ENCODE measurements at regions of chr17 and their contacts with region 1.

Region 1: DNA sequence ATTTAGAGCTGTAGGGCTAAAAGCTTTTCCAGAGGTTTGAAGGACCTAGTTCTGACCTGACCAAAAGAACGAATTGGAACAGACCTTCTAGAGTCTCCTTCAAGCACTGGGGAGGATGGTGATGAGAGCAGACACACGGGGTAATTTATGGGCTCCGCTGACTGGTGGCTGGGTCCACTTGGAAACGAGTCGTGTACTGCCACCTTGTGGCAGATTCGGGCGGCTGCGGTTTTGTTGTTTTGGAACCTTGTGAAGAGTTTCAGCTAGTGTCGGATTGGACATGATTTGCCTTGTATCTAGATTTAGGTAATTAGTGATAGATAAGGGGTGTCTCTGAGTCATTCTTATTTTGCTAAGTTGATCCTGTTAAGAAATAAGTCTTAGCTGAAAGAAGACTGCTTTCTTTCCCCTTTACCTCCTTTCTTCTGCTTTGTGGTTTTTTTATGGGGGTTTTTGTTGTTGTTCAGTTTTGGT is 98.9 kb downstream of the AATF start:
- DNase-seq: peak; percentile 81 to 83
- H3K4me3 ChIP-seq: no peak overlapping the region
- H3K4me3 Mint-ChIP-seq: no peak overlapping the region
- H3K27ac Mint-ChIP-seq: no peak overlapping the region
- H3K4me1 ChIP-seq: no peaks in the 10 kb centered on the region
- H3K4me1 Mint-ChIP-seq: peaks cover 6% of the 10 kb centered on the region
- H3K27me3 ChIP-seq: no peaks in the 10 kb centered on the region
- H3K27me3 Mint-ChIP-seq: no peaks in the 10 kb centered on the region
- CTCF ChIP-seq: peak; percentile 90 to 92

Region 2: DNA sequence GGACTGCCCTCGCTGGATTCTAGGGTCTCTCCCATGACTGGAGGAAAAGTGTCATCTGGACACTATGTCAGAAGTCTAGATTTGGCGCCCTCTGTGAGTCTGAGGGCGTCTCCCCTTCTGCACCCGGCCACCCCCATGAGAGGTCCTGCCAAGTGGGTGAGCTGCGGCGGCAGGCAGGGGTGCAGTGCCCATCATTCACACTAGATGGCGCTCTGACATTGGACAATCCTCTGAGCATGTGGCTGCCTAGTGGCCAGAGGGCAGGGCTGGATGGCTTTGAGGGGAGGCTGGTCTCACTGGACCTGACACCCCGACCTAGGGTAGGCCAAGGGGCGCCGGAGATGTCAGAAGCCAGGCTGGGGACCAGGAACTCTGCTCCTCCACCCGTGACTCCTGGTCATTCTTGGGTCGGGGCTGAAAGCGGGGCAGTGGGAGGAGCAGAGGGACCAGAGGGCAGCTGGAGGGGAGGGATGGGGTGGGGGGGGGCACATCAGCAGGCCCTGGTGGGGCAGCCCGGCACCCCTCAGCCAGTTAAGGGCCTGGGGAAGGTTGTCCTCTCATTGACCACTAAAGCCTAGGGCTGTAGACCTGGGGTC is 418.3 kb before region 1 on chr17:
- CTCF ChIA-PET with region 1: interaction called, 4 read pairs
- POLR2A ChIA-PET with region 1: no interaction called
- intact Hi-C with region 1: loop called (anchors 2 kb)
- DNase-seq: peak; percentile 82 to 90
- H3K4me3 ChIP-seq: no peak overlapping the region
- H3K4me3 Mint-ChIP-seq: no peak overlapping the region
- H3K27ac Mint-ChIP-seq: no peak overlapping the region
- H3K4me1 ChIP-seq: no peaks in the 10 kb centered on the region
- H3K4me1 Mint-ChIP-seq: no peaks in the 10 kb centered on the region
- H3K27me3 ChIP-seq: no peaks in the 10 kb centered on the region
- H3K27me3 Mint-ChIP-seq: peaks cover 14% of the 10 kb centered on the region
- CTCF ChIP-seq: peak; percentile 96 to 98

Region 3: GRCh38 chr17:36861531-36861930 is 186.1 kb before region 1 on chr17:
- CTCF ChIA-PET with region 1: no interaction called
- POLR2A ChIA-PET with region 1: interaction called, 10 read pairs
- intact Hi-C with region 1: no loop called
- DNase-seq: peak in 1 of 2 experiments; percentile 46
- H3K4me3 ChIP-seq: no peak overlapping the region
- H3K4me3 Mint-ChIP-seq: no peak overlapping the region
- H3K27ac Mint-ChIP-seq: no peak overlapping the region
- H3K4me1 ChIP-seq: peaks cover 4% of the 10 kb centered on the region; the same call in 1 of the 2 replicates
- H3K4me1 Mint-ChIP-seq: no peaks in the 10 kb centered on the region
- H3K27me3 ChIP-seq: no peaks in the 10 kb centered on the region
- H3K27me3 Mint-ChIP-seq: peaks cover 9% of the 10 kb centered on the region
- CTCF ChIP-seq: no peak

Region 4: DNA sequence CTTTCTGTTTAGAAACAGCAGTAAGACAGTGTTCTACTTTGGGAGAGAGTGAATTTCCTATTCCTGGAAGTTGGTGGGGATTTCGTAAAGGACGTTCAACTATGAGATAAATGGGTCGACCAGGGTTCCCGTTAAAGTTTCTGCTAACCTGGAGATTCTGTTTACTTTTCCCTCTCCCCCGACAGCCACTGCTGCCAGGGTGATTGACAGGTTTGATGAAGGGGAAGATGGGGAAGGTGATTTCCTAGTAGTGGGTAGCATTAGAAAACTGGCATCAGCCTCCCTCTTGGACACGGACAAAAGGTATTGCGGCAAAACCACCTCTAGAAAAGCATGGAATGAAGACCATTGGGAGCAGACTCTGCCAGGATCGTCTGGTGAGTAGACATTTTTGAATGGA is 97.6 kb before region 1 on chr17:
- CTCF ChIA-PET with region 1: no interaction called
- POLR2A ChIA-PET with region 1: no interaction called
- intact Hi-C with region 1: no loop called
- DNase-seq: no peak
- H3K4me3 ChIP-seq: peak overlapping the region; percentile 91
- H3K4me3 Mint-ChIP-seq: peak overlapping the region; percentile 79
- H3K27ac Mint-ChIP-seq: peak overlapping the region; percentile 74
- H3K4me1 ChIP-seq: peaks cover 8% of the 10 kb centered on the region; the same call in 1 of the 2 replicates
- H3K4me1 Mint-ChIP-seq: peaks cover 7% of the 10 kb centered on the region
- H3K27me3 ChIP-seq: no peaks in the 10 kb centered on the region
- H3K27me3 Mint-ChIP-seq: peaks cover 7% of the 10 kb centered on the region
- CTCF ChIP-seq: no peak

Region 5: DNA sequence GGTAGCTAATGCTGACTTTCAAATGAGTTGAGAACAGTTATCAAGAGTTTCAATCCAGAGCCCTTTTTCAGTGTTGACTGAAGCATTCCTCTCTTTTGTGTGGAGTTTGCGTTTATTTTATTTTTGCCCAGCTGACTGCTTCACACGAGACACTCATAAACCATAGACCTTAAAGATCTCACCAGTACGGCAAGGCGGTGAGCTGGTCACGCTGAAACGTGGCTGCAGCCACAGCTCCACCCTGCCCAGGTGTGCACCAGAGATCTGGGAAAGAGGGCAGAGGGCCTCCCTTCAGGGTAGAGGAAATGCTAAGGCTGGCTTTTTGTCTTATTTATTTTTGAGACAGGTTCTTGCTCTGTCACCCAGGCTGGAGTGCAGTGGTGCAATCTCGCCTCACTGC is 13.3 kb after region 1 on chr17:
- CTCF ChIA-PET with region 1: interaction called, 14 read pairs
- POLR2A ChIA-PET with region 1: no interaction called
- intact Hi-C with region 1: no loop called
- DNase-seq: no peak
- H3K4me3 ChIP-seq: no peak overlapping the region
- H3K4me3 Mint-ChIP-seq: no peak overlapping the region
- H3K27ac Mint-ChIP-seq: peak overlapping the region; percentile 35
- H3K4me1 ChIP-seq: peaks cover 7% of the 10 kb centered on the region; the same call in 1 of the 2 replicates
- H3K4me1 Mint-ChIP-seq: peaks cover 11% of the 10 kb centered on the region
- H3K27me3 ChIP-seq: no peaks in the 10 kb centered on the region
- H3K27me3 Mint-ChIP-seq: no peaks in the 10 kb centered on the region
- CTCF ChIP-seq: no peak